A673 (cell line): ENCODE measurements at regions of chr2 and their contacts with region 1.

Region 1: DNA sequence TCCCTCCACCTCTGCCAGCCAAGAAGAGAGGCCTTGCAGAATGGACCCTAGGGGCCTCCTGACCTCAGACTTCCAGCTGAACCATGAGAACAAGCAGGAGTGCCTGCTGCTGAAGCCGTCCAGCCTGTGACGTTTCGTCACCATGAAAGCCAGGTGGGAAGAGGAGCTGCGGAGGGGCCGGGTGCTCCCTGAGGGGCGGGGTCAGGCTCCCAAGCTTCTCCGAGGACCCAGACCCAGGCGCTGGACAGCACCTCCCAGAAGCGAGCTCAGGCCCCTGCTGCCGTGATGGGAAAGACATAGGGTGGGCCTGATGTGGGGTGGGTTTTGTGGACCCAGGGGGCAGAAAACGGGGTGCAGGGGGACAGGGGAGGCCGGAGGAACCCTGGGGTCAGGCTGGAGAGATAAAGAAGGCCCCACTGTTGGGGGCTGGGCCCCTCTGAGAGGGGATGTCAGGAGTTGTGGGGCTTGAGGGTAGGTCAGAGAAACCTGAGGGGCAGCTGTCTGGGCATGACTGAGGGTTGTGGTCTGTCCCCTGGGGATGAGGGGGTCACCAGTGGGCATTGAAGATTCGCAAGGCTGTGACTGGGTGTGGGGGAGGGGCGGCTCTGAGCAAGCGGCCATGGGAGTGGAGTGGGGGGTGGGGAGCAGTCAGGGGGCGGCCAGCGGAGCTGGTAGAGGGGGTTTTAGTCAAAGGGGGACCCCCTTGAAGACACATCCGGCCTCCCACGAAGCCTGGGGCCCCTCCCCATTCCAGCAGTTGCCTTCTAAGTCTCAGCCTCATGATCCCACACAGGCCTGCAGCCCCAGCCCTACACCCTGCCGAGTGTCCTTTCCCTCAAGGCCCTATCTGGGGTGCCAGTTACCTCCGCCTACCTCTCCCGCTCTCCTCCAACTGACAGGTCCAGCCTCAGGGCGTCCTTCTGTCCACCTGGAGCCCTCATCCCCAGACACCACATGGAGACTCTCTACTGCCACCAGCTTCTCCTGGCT is 73.5 kb upstream of the ODC1 start:
- DNase-seq: no peak
- H3K4me3 ChIP-seq: no peak overlapping the region
- H3K27ac ChIP-seq: no peak overlapping the region
- H3K4me1 ChIP-seq: no peaks in the 10 kb centered on the region
- H3K27me3 ChIP-seq: no peaks in the 10 kb centered on the region
- CTCF ChIP-seq: no peak

Region 2: GRCh38 chr2:10706033-10706432 is 184.4 kb after region 1 on chr2:
- CTCF ChIA-PET with region 1: no interaction called
- POLR2A ChIA-PET with region 1: interaction called, 10 read pairs
- intact Hi-C with region 1: no loop called
- DNase-seq: no peak
- H3K4me3 ChIP-seq: no peak overlapping the region
- H3K27ac ChIP-seq: no peak overlapping the region
- H3K4me1 ChIP-seq: no peaks in the 10 kb centered on the region
- H3K27me3 ChIP-seq: no peaks in the 10 kb centered on the region
- CTCF ChIP-seq: no peak